ENCODE measurements at regions of chr5 and their contacts with region 1.

Region 1: GRCh38 chr5:79535477-79536192 is 21.7 kb upstream of the HOMER1 start:
- DNase-seq: peak in 1 of 35 experiments; percentile 19
- ATAC-seq: no peak
- H3K4me3 ChIP-seq: no peak overlapping the region
- H3K4me3 Mint-ChIP-seq: no peak overlapping the region
- H3K27ac ChIP-seq: no peak overlapping the region
- H3K27ac Mint-ChIP-seq: no peak overlapping the region
- H3K4me1 ChIP-seq: no peaks in the 10 kb centered on the region
- H3K4me1 Mint-ChIP-seq: no peaks in the 10 kb centered on the region
- H3K27me3 ChIP-seq: no peaks in the 10 kb centered on the region
- H3K27me3 Mint-ChIP-seq: peaks cover 3 to 5% of the 10 kb centered on the region in 2 donors

Region 2: GRCh38 chr5:79547429-79547822 is 11.8 kb after region 1 on chr5:
- CTCF ChIA-PET with region 1: no interaction called
- POLR2A ChIA-PET with region 1: no interaction called
- DNase-seq: no peak
- ATAC-seq: no peak
- H3K4me3 ChIP-seq: no peak overlapping the region
- H3K4me3 Mint-ChIP-seq: no peak overlapping the region
- H3K27ac ChIP-seq: no peak overlapping the region
- H3K27ac Mint-ChIP-seq: no peak overlapping the region
- H3K4me1 ChIP-seq: no peaks in the 10 kb centered on the region
- H3K4me1 Mint-ChIP-seq: no peaks in the 10 kb centered on the region
- H3K27me3 ChIP-seq: no peaks in the 10 kb centered on the region
- H3K27me3 Mint-ChIP-seq: no peaks in the 10 kb centered on the region

Region 3: GRCh38 chr5:79573983-79574890 is 38.6 kb after region 1 on chr5:
- CTCF ChIA-PET with region 1: no interaction called
- POLR2A ChIA-PET with region 1: no interaction called
- DNase-seq: no peak
- ATAC-seq: no peak
- H3K4me3 ChIP-seq: no peak overlapping the region
- H3K4me3 Mint-ChIP-seq: no peak overlapping the region
- H3K27ac ChIP-seq: no peak overlapping the region
- H3K27ac Mint-ChIP-seq: no peak overlapping the region
- H3K4me1 ChIP-seq: no peaks in the 10 kb centered on the region
- H3K4me1 Mint-ChIP-seq: no peaks in the 10 kb centered on the region
- H3K27me3 ChIP-seq: no peaks in the 10 kb centered on the region
- H3K27me3 Mint-ChIP-seq: peaks cover 3 to 11% of the 10 kb centered on the region in 2 donors

Region 4: DNA sequence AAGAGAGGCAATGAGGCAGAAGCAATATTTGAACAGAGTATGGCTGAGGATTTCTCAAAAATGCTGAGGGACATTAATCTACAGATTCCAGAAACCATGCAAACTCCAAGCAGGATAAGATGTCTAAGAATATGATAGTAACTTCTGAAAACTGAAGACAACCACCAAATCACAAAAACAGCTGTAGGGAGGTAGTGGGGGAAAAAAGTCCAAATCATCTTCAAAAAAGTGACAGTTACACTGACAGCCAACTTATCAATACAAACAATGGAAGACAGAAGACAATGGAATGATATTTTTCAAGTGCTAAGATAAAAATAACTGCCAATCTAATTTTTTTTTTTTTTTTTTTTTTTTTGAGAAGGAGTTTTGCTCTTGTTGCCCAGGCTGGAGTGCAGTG is 184.5 kb after region 1 on chr5:
- CTCF ChIA-PET with region 1: interaction called in 1 of 2 experiments, 10 read pairs
- POLR2A ChIA-PET with region 1: no interaction called
- DNase-seq: no peak
- ATAC-seq: no peak
- H3K4me3 ChIP-seq: no peak overlapping the region
- H3K4me3 Mint-ChIP-seq: no peak overlapping the region
- H3K27ac ChIP-seq: no peak overlapping the region
- H3K27ac Mint-ChIP-seq: no peak overlapping the region
- H3K4me1 ChIP-seq: no peaks in the 10 kb centered on the region
- H3K4me1 Mint-ChIP-seq: no peaks in the 10 kb centered on the region
- H3K27me3 ChIP-seq: no peaks in the 10 kb centered on the region
- H3K27me3 Mint-ChIP-seq: peaks cover 0 to 7% of the 10 kb centered on the region in 2 donors